SK-N-SH (cell line): ENCODE measurements at regions of chr6 and their contacts with region 1.

Region 1: DNA sequence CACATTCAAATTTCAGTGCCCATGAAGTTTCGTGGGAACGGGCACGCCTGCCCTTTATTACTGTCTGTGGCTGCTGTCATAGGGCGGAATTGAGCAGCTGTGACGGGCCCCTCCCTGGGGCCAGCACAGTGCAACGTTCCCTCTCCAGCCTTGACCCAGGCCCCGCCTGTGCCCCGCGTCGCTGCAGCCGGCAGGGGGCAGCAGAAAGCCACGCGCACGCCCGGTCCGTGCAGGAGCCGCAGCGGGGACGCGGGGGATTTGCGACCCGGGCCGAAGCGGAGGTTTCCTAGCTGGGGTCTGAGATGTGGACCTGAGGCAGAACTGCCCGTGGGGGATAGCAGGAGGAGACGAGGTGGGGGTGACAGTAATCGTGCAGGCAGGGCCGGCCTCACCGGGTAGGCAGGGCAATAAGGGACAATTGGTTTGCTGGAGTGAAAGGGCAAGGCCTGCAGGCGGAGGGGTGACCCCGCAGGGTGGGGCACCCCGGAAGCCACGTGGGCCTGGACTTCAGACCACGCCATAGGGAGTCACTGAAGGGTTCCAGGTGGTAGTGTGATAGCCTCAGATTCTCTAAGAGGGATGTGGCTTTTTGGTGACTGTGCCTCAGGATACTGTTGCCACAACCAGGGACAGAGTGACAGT is 54.4 kb downstream of the SYTL3 start:
- DNase-seq: peak; percentile 93
- H3K4me3 ChIP-seq: peak overlapping the region; percentile 41 to 75
- H3K27ac ChIP-seq: no peak overlapping the region
- H3K4me1 ChIP-seq: peaks cover 15 to 28% of the 10 kb centered on the region in 2 experiments
- H3K27me3 ChIP-seq: no peaks in the 10 kb centered on the region
- CTCF ChIP-seq: peak; percentile 98
- EP300 ChIP-seq: no peak
- RAD21 ChIP-seq: peak; percentile 89

Region 2: DNA sequence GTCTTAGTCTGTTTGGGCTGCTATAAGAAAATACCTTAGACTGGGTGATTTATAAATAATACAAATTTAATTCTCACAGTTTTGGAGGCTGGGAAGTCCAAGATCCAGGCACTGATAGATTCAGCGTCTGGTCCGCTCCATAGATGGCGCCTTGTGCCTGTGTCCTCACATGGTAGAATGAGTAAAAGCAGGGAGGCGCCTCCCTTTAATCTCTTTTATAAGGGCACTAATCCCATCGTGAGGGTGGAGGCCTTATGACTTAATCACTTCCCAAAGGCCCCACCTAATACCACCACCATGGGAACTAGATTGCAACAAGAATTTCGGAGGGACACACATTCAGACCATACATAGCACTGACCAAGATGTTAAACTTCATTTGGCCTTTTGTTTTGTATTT is 235.6 kb before region 1 on chr6:
- CTCF ChIA-PET with region 1: no interaction called
- POLR2A ChIA-PET with region 1: no interaction called
- DNase-seq: no peak
- H3K4me3 ChIP-seq: no peak overlapping the region
- H3K27ac ChIP-seq: no peak overlapping the region
- H3K4me1 ChIP-seq: peaks cover 0 to 4% of the 10 kb centered on the region in 2 experiments; a peak in 3 of 4 replicates
- H3K27me3 ChIP-seq: no peaks in the 10 kb centered on the region
- CTCF ChIP-seq: no peak
- EP300 ChIP-seq: no peak
- RAD21 ChIP-seq: no peak; the same call in 1 of the 2 replicates

Region 3: GRCh38 chr6:158718461-158719046 is 14.3 kb after region 1 on chr6:
- CTCF ChIA-PET with region 1: interaction called, 24 read pairs
- POLR2A ChIA-PET with region 1: no interaction called
- DNase-seq: peak; percentile 59
- H3K4me3 ChIP-seq: no peak overlapping the region; a peak in 1 of 4 replicates
- H3K27ac ChIP-seq: no peak overlapping the region
- H3K4me1 ChIP-seq: peaks cover 2 to 15% of the 10 kb centered on the region in 2 experiments; a peak in 3 of 4 replicates
- H3K27me3 ChIP-seq: no peaks in the 10 kb centered on the region
- CTCF ChIP-seq: peak; percentile 56
- EP300 ChIP-seq: no peak
- RAD21 ChIP-seq: peak; percentile 59

Region 4: GRCh38 chr6:158819910-158820622 is 115.8 kb after region 1 on chr6:
- CTCF ChIA-PET with region 1: no interaction called
- POLR2A ChIA-PET with region 1: no interaction called
- DNase-seq: no peak
- H3K4me3 ChIP-seq: no peak overlapping the region
- H3K27ac ChIP-seq: peak overlapping the region; percentile 47 to 83; a peak in 3 of 4 replicates
- H3K4me1 ChIP-seq: peaks cover 11 to 17% of the 10 kb centered on the region in 2 experiments; a peak in 2 of 4 replicates
- H3K27me3 ChIP-seq: no peaks in the 10 kb centered on the region
- CTCF ChIP-seq: no peak
- EP300 ChIP-seq: no peak
- RAD21 ChIP-seq: no peak

Region 5: GRCh38 chr6:158958504-158959386 is 254.4 kb after region 1 on chr6:
- CTCF ChIA-PET with region 1: interaction called, 21 read pairs
- POLR2A ChIA-PET with region 1: no interaction called
- DNase-seq: no peak
- H3K4me3 ChIP-seq: no peak overlapping the region
- H3K27ac ChIP-seq: no peak overlapping the region
- H3K4me1 ChIP-seq: no peaks in the 10 kb centered on the region; a peak in 1 of 4 replicates
- H3K27me3 ChIP-seq: no peaks in the 10 kb centered on the region
- CTCF ChIP-seq: no peak
- EP300 ChIP-seq: no peak
- RAD21 ChIP-seq: no peak